ENCODE measurements at regions of chr1 and their contacts with region 1.

Region 1: DNA sequence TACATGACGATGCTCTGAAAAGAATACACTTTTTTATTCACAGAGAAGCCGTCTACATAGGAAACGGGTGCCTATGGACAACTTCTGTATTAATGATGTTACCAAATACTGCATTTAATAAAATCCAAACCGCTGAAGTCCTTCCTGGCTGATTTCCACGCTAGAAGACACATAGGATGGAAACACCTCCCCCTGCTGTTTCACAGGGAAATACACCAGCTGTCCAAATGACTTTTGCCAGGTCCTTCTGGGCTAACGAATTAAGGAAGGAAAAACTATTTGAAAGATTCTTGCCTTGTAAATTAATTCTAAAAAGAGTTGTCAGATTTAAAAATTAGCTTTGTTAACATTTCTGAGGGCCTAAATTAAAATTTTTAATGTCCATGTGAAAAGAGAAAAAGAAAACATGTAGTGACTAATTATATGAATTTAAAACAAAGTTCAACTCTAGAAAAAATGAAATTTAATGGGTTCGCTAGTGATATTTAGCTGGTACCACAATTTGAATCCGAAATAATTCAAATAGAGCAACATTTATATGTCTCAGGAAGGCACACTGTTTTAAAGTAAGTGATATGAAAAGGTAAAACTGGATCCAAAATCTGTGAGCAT is 146.0 kb downstream of the RERE start:
- DNase-seq: peak; percentile 79
- H3K4me3 ChIP-seq: no peak overlapping the region
- H3K27ac ChIP-seq: no peak overlapping the region
- H3K4me1 ChIP-seq: peaks cover 32% of the 10 kb centered on the region
- H3K27me3 ChIP-seq: no peaks in the 10 kb centered on the region
- CTCF ChIP-seq: peak; percentile 66 to 78
- POLR2A ChIP-seq: no peak

Region 2: DNA sequence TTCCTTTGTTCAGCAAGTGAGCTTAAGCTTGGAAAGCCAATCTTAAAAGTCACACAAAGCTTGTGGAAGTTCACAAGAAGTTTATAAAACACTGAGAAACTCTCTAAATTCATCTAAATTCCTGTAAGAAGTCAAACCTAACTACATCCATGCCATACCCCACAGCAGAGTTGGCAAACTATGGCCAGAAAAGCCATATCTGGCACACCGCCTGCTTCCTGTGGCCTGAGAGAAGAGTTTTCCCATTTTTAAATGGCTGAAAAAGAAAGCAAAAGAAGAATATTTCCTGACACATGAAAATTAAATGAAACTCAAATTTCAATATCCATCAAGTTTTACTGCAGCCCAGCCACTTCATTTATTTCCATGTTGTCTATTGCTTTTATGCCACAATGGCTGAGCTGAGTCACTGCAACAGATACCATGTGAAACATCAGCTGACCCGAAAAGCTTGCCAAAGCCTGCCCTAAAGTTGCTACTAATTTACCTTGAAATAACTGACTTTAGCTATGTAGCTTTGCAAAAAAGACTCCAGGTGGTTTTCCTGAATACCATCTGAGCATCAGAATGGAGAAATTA is 116.4 kb before region 1 on chr1:
- CTCF ChIA-PET with region 1: interaction called, 10 read pairs
- POLR2A ChIA-PET with region 1: no interaction called
- dilution Hi-C with region 1: no loop called
- intact Hi-C with region 1: no loop called
- DNase-seq: peak; percentile 53
- H3K4me3 ChIP-seq: no peak overlapping the region
- H3K27ac ChIP-seq: no peak overlapping the region
- H3K4me1 ChIP-seq: peaks cover 3% of the 10 kb centered on the region
- H3K27me3 ChIP-seq: no peaks in the 10 kb centered on the region
- CTCF ChIP-seq: no peak
- POLR2A ChIP-seq: no peak

Region 3: GRCh38 chr1:8580566-8580965 is 90.8 kb before region 1 on chr1:
- CTCF ChIA-PET with region 1: interaction called, 13 read pairs
- POLR2A ChIA-PET with region 1: no interaction called
- dilution Hi-C with region 1: no loop called
- intact Hi-C with region 1: no loop called
- DNase-seq: no peak
- H3K4me3 ChIP-seq: no peak overlapping the region
- H3K27ac ChIP-seq: no peak overlapping the region
- H3K4me1 ChIP-seq: no peaks in the 10 kb centered on the region
- H3K27me3 ChIP-seq: no peaks in the 10 kb centered on the region
- CTCF ChIP-seq: no peak
- POLR2A ChIP-seq: no peak

Region 4: GRCh38 chr1:8649027-8649426 is 22.4 kb before region 1 on chr1:
- CTCF ChIA-PET with region 1: interaction called, 15 read pairs
- POLR2A ChIA-PET with region 1: no interaction called
- dilution Hi-C with region 1: no loop called
- intact Hi-C with region 1: no loop called
- DNase-seq: peak; percentile 85
- H3K4me3 ChIP-seq: no peak overlapping the region
- H3K27ac ChIP-seq: peak overlapping the region; percentile 33
- H3K4me1 ChIP-seq: peaks cover 35% of the 10 kb centered on the region
- H3K27me3 ChIP-seq: no peaks in the 10 kb centered on the region
- CTCF ChIP-seq: no peak
- POLR2A ChIP-seq: no peak

Region 5: GRCh38 chr1:8702850-8703810 is 31.7 kb after region 1 on chr1:
- CTCF ChIA-PET with region 1: interaction called, 12 read pairs
- POLR2A ChIA-PET with region 1: no interaction called
- dilution Hi-C with region 1: no loop called
- intact Hi-C with region 1: no loop called
- DNase-seq: peak; percentile 96
- H3K4me3 ChIP-seq: peak overlapping the region; percentile 61 to 94 (median 80)
- H3K27ac ChIP-seq: peak overlapping the region; percentile 77
- H3K4me1 ChIP-seq: peaks cover 17% of the 10 kb centered on the region
- H3K27me3 ChIP-seq: no peaks in the 10 kb centered on the region
- CTCF ChIP-seq: peak in 1 of 2 donors; percentile 20
- POLR2A ChIP-seq: peak; percentile 95

Measured in endothelial cell of umbilical vein (primary cell).